Heart left ventricle (tissue), 16 donors: ENCODE measurements at regions of chr20 and their contacts with region 1.

Region 1: GRCh38 chr20:62053465-62054196 is 12.1 kb downstream of the TAF4 start:
- DNase-seq: peak in 1 of 5 donors; percentile 5
- ATAC-seq: no peak
- H3K4me3 ChIP-seq: no peak overlapping the region
- H3K27ac ChIP-seq: no peak overlapping the region
- H3K4me1 ChIP-seq: peaks cover 0 to 33% (median 5%) of the 10 kb centered on the region in 12 donors
- H3K27me3 ChIP-seq: no peaks in the 10 kb centered on the region
- CTCF ChIP-seq: no peak
- POLR2A ChIP-seq: no peak

Region 2: GRCh38 chr20:61901392-61902220 is 152.0 kb before region 1 on chr20:
- intact Hi-C with region 1: no loop called
- DNase-seq: peak in 1 of 5 donors; percentile 32
- ATAC-seq: no peak
- H3K4me3 ChIP-seq: no peak overlapping the region
- H3K27ac ChIP-seq: no peak overlapping the region
- H3K4me1 ChIP-seq: no peaks in the 10 kb centered on the region
- H3K27me3 ChIP-seq: peaks cover 0 to 25% (median 0%) of the 10 kb centered on the region in 9 donors
- CTCF ChIP-seq: no peak
- POLR2A ChIP-seq: no peak

Region 3: DNA sequence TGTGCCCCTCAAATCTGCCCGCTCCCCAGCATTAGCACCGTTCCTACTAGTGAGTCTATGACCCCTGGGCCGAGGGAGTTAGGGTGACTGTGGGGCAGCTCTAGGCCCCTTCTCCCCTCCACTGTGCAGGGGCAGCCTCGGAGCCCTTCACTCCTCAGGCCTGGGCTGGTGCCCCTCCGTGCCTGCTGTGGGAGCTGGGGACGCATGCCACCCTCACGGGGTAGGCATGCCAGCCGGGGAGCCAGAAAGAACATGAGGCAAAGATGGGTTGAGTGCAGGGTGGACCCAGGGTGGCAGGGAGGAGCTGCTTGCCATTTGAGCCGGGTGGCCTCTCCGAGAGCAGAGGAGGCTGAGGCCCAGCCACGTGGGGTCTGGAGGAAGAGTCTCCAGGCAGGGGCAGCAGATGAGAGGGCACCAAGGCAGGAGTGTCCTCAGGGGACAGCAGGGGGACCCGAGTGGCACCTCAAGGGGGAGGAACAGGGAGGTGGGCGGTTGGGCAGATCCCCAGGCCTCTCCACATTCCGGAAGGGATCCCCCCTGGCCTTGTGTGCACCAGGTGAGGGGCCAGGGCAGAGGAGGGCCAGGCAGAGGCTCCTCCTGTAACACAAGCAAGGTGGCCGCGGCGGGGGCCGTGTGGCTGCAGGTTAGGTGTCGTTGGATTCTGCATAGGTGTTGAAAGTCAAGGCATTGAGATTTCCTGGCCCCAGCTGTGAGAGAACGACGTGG is 50.0 kb after region 1 on chr20:
- intact Hi-C with region 1: loop called in 1 of 10 experiments (anchors 2 kb)
- DNase-seq: no peak
- ATAC-seq: no peak
- H3K4me3 ChIP-seq: no peak overlapping the region
- H3K27ac ChIP-seq: no peak overlapping the region
- H3K4me1 ChIP-seq: no peaks in the 10 kb centered on the region
- H3K27me3 ChIP-seq: no peaks in the 10 kb centered on the region
- CTCF ChIP-seq: no peak
- POLR2A ChIP-seq: no peak